HEK293 (cell line): ENCODE measurements at regions of chr17 and their contacts with region 1.

Region 1: GRCh38 chr17:80008383-80008840 is 27.3 kb downstream of the TBC1D16 start:
- H3K4me3 ChIP-seq: no peak overlapping the region
- H3K27ac ChIP-seq: no peak overlapping the region
- H3K4me1 ChIP-seq: no peaks in the 10 kb centered on the region
- CTCF ChIP-seq: peak; percentile 94

Region 2: GRCh38 chr17:79427623-79428539 is 580.5 kb before region 1 on chr17:
- CTCF ChIA-PET with region 1: no interaction called
- POLR2A ChIA-PET with region 1: no interaction called
- H3K4me3 ChIP-seq: no peak overlapping the region
- H3K27ac ChIP-seq: no peak overlapping the region
- H3K4me1 ChIP-seq: no peaks in the 10 kb centered on the region
- CTCF ChIP-seq: no peak

Region 3: DNA sequence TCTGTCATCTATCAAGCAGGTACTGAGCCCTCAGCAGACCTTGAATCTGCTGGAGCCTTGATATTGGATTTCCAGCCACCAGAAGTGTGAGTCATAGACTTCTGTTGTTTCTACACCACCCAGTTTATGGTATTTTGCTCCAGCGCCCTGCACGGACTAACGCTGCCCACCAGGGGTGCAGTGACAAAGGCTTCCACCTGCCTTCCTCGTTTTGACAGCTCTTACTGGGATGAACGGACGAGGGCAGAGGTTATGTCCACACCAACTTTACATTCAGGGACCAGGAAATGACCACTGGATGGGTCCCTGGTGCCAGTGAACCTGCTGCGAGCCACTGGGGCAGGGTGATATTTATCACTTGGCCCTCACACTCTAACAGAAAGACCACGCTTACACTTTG is 102.6 kb before region 1 on chr17:
- CTCF ChIA-PET with region 1: no interaction called
- POLR2A ChIA-PET with region 1: no interaction called
- H3K4me3 ChIP-seq: no peak overlapping the region
- H3K27ac ChIP-seq: no peak overlapping the region
- H3K4me1 ChIP-seq: no peaks in the 10 kb centered on the region; the same call in 1 of the 2 replicates
- CTCF ChIP-seq: no peak

Region 4: GRCh38 chr17:79970576-79971068 is 37.8 kb before region 1 on chr17:
- CTCF ChIA-PET with region 1: interaction called, 16 read pairs
- POLR2A ChIA-PET with region 1: no interaction called
- H3K4me3 ChIP-seq: no peak overlapping the region
- H3K27ac ChIP-seq: no peak overlapping the region
- H3K4me1 ChIP-seq: no peaks in the 10 kb centered on the region
- CTCF ChIP-seq: peak; percentile 69

Region 5: DNA sequence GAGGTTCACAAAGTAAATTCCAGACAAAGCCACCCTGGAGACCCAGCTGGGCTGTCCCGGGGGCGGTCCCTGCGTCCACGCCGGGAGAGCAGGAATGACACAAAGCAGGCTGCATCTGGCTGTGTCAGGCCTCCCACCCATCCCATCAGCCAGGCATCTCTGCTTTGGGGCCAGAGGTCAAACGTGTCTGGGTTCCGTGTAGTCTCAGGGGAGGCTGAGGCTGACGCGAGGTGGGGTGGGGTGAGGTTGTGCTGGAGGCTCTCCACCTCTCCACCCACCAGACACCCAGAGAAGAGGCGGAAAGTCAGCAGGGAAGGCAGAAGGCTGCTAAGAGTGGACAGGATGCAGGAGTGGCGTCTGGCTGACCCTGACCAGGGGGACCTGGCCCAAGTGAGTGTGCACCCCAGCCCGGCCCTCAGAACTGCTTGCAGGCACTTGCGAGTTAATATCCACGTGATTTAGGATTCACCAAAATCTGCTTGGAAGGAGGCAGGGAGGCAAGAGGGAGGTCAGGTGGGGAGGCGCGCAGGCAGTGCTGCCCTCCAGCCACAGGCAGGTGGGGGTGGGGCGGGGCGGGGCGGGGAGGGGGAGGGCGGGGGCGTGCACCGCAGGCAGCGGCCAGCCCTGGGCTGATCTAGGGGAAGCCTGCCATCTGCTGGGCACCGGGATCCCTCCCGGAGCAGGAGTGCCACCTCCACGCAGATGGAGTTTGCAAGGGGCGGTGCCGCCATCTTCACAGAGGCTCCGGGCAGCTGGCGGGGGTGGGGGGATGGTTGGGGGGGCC is 17.1 kb before region 1 on chr17:
- CTCF ChIA-PET with region 1: interaction called, 41 read pairs
- POLR2A ChIA-PET with region 1: interaction called, 3 read pairs
- H3K4me3 ChIP-seq: no peak overlapping the region
- H3K27ac ChIP-seq: peak overlapping the region; percentile 85; the same call in 1 of the 2 replicates
- H3K4me1 ChIP-seq: peaks cover 36% of the 10 kb centered on the region
- CTCF ChIP-seq: no peak

Region 6: DNA sequence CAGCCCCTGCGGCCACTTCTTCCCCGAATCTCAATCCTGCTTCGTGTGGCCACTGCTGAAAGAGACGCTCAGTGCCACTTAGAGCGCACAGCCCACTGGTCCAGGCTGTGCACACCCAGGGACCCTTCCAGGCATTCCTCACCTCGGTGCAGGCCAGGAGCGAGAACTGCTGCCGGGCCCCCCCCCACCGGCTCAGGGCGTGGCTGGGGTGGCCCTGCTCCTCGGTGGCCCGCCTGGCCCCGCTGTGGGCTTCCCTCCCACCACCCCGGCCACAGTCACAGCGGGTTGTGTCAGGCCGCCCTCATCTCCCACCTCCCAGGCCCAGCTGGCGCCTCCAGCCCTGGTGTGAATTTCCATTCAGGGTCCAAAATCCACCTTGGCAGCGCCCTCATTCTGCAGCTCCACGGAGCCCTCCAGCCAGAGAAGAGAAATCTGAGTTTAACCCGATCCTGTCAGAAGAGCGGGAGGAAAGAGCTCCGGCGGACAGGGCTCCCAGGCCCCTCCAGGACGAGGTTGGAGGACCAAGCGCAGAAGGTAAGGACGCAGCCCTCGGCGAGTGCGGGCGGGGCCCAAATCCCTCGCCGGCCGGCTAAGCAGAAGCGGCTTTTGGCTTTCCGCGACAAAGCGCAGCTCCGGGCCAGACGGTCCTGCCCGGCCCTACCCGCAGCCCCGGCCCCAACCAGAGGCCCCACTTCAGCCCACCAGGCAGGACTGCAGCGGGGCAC is 15.2 kb after region 1 on chr17:
- CTCF ChIA-PET with region 1: interaction called, 58 read pairs
- POLR2A ChIA-PET with region 1: interaction called, 3 read pairs
- H3K4me3 ChIP-seq: no peak overlapping the region
- H3K27ac ChIP-seq: no peak overlapping the region
- H3K4me1 ChIP-seq: peaks cover 3% of the 10 kb centered on the region; the same call in 1 of the 2 replicates
- CTCF ChIP-seq: no peak

Region 7: GRCh38 chr17:80029258-80029974 is 21.0 kb after region 1 on chr17:
- CTCF ChIA-PET with region 1: interaction called, 29 read pairs
- POLR2A ChIA-PET with region 1: interaction called, 5 read pairs
- H3K4me3 ChIP-seq: no peak overlapping the region
- H3K27ac ChIP-seq: no peak overlapping the region
- H3K4me1 ChIP-seq: peaks cover 3% of the 10 kb centered on the region
- CTCF ChIP-seq: no peak

Region 8: GRCh38 chr17:80035943-80036714 is 27.7 kb after region 1 on chr17 and contains the start of gene CCDC40:
- CTCF ChIA-PET with region 1: interaction called, 18 read pairs
- POLR2A ChIA-PET with region 1: interaction called, 5 read pairs
- H3K4me3 ChIP-seq: peak within 1 kb of the TSS; percentile 70
- H3K27ac ChIP-seq: peak within 1 kb of the TSS; percentile 72; the same call in 1 of the 2 replicates
- H3K4me1 ChIP-seq: no peaks in the 10 kb centered on the region
- CTCF ChIP-seq: peak; percentile 45; the same call in 1 of the 2 replicates

Region 9: DNA sequence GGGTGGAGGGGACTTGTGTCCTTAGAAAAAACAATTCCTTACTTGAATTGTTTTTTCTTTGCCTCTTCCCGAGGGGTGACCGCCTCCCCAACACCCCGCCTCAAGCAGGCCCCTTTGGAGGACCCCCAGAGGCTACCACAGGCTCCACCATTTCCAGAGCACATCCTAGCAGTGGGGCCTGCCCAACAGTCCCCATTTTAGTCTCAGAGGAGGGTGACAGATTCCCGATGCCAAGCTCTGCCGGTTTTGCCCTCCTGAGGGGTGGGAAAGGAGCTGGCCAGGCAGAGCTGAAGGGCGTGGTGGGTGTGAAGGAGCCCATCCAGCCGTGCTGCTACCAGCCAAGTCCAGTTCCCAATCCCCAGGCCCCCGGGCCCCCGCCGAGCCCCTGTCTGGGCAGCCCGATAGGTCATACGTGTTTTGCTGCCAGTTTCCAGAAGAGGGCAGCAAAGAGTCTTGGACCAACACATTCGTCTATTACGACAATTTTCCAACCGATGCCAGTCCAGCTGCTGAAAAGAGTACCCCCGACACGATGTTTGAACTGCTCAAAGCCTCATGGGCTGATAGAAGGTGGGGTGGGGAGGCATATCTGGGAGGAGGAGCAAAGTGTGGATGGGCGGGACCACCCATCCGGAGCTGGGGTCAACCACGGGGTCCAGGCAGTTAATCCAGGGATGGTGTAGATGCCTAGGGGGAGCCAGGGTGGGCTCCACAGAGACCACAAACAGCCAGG is 74.2 kb after region 1 on chr17:
- CTCF ChIA-PET with region 1: interaction called, 51 read pairs
- POLR2A ChIA-PET with region 1: no interaction called
- H3K4me3 ChIP-seq: no peak overlapping the region
- H3K27ac ChIP-seq: no peak overlapping the region
- H3K4me1 ChIP-seq: no peaks in the 10 kb centered on the region
- CTCF ChIP-seq: peak; percentile 52; the same call in 1 of the 2 replicates

Region 10: GRCh38 chr17:80203471-80203963 is 195.1 kb after region 1 on chr17:
- CTCF ChIA-PET with region 1: no interaction called
- POLR2A ChIA-PET with region 1: no interaction called
- H3K4me3 ChIP-seq: no peak overlapping the region
- H3K27ac ChIP-seq: no peak overlapping the region
- H3K4me1 ChIP-seq: no peaks in the 10 kb centered on the region
- CTCF ChIP-seq: no peak

Region 11: GRCh38 chr17:80656590-80656989 is 648.2 kb after region 1 on chr17:
- CTCF ChIA-PET with region 1: no interaction called
- POLR2A ChIA-PET with region 1: no interaction called
- H3K4me3 ChIP-seq: no peak overlapping the region
- H3K27ac ChIP-seq: no peak overlapping the region
- H3K4me1 ChIP-seq: no peaks in the 10 kb centered on the region
- CTCF ChIP-seq: no peak